ENCODE measurements at regions of chr11 and their contacts with region 1.

Region 1: DNA sequence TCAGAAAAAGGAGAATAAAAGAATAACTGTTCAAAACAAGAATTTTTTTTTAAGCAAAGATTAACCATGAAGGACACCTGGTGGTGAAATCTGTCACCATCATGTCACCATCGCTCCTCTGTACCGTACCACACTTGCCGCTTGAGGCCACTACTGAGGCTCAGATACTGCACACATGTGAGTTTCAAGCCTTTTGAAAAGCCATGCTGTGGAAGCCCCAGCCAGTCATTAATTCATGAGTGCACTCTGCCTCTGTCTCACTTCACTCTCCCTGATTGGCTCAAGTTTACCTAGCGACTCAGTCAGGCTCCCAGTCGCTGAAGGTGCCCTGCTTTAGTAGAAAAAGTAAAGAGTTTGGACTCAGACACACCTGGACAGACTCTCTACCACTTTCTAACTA is 6.6 kb upstream of the MS4A12 start:
- DNase-seq: peak; percentile 54
- ATAC-seq: peak; percentile 100
- H3K4me3 ChIP-seq: no peak overlapping the region
- H3K27ac ChIP-seq: no peak overlapping the region
- H3K4me1 ChIP-seq: no peaks in the 10 kb centered on the region
- H3K27me3 ChIP-seq: no peaks in the 10 kb centered on the region
- CTCF ChIP-seq: peak; percentile 66
- EP300 ChIP-seq: no peak
- POLR2A ChIP-seq: no peak
- RAD21 ChIP-seq: no peak

Region 2: GRCh38 chr11:60334005-60334620 is 151.9 kb before region 1 on chr11:
- CTCF ChIA-PET with region 1: no interaction called
- POLR2A ChIA-PET with region 1: no interaction called
- in situ Hi-C with region 1: loop called (anchors 25 kb)
- intact Hi-C with region 1: no loop called
- DNase-seq: peak; percentile 42
- ATAC-seq: peak; percentile 88
- H3K4me3 ChIP-seq: no peak overlapping the region
- H3K27ac ChIP-seq: no peak overlapping the region
- H3K4me1 ChIP-seq: no peaks in the 10 kb centered on the region
- H3K27me3 ChIP-seq: no peaks in the 10 kb centered on the region
- CTCF ChIP-seq: peak; percentile 57
- EP300 ChIP-seq: no peak
- POLR2A ChIP-seq: no peak
- RAD21 ChIP-seq: 0 out of 2 replicates have a peak, but pooled peaks have one; percentile 22